Activated B cell treated with CpG ODN at 0.5 μM for 24 hours (primary cell): ENCODE measurements at regions of chr16 and their contacts with region 1.

Region 1: DNA sequence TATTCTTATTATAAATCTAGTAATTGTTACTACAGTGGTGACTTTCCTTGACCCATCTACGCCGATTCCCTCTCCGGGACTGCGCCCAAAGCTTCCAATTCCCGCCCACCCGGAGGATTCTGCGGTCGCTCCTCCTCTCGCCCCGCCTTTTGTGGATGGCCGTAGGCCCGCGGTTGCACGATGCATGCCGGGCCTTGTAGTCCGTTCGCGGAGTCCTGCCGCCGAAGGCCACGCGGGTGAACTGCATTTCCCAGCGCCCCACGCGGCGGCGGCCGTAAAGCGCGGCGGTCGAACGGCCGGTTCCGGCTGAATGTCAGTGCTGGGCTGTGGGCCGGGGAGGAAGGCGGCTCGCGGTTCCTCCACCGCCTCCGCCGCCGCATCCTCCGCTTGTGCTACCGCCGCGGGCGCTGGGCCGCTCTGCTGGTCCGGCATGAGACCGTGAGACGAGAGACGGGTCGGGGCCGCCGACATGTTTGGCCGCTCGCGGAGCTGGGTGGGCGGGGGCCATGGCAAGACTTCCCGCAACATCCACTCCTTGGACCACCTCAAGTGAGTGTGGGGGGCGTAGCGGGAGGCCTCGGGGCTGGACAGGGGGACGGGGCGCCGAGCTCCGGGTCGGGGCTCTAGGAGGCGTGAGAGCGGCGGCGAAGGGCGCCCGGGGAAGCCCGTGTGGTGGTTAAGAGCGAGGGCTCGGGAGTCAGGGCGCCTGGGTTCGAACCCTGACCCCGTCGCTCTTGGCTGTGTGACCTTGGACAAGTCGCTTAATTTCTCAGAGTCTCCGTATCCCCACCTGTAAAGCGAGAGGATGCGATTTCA is at the start of gene CLEC16A:
- DNase-seq: peak; percentile 97
- ATAC-seq: peak; percentile 74
- H3K4me3 Mint-ChIP-seq: peak within 1 kb of the TSS; percentile 90
- H3K27ac Mint-ChIP-seq: peak within 1 kb of the TSS; percentile 81
- H3K4me1 Mint-ChIP-seq: peaks cover 83% of the 10 kb centered on the region
- H3K27me3 Mint-ChIP-seq: no peaks in the 10 kb centered on the region
- CTCF ChIP-seq: no peak
- total RNA-seq, gene CLEC16A: 53.4 and 57.6 TPM in 2 replicates

Region 2: DNA sequence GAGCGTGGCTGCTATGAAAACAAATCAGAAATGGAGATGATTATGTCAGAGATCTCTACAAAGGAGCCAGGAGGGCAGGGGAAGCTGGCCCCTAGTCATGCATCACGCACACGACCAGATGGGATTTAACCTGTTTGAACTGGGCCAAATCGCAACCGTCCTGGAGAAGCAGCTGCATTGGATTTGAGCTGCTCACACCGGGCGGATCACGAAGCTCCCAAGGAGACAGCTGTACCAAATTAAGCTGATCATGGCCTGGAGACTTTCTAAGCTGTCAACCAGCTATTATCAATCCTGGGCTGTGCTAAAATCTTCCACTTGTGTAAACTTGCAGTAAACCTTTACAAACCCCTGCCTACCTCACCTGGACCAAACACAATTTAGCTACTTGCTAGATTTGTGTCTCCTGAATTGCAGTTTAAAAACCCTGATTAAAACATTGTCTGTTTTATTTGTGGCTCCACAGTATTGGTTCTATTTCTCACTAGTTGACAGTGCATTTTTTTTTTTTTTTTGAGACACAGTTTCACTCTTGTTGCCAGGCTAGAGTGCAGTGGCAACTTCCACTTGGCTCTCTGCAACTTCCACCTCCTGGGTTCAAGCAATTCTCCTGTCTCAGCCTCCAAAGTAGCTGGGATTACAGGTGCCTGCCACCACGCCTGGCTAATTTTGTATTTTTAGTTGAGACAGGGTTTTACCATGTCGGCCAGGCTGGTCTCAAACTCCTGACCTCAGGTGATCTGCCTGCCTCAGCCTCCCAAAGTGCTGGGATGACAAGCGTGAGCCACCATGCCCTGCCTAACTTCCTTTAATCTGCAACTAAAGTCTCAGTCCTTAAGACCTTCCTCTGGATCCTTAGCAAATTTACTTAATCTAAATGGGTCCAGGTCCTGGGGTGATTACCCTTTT is 663.9 kb before region 1 on chr16:
- CTCF ChIA-PET with region 1: no interaction called
- POLR2A ChIA-PET with region 1: interaction called, 11 read pairs
- intact Hi-C with region 1: no loop called
- DNase-seq: no peak
- ATAC-seq: no peak
- H3K4me3 Mint-ChIP-seq: no peak overlapping the region
- H3K27ac Mint-ChIP-seq: no peak overlapping the region
- H3K4me1 Mint-ChIP-seq: peaks cover 17% of the 10 kb centered on the region
- H3K27me3 Mint-ChIP-seq: no peaks in the 10 kb centered on the region
- CTCF ChIP-seq: no peak

Region 3: GRCh38 chr16:10737068-10737625 is 207.3 kb before region 1 on chr16:
- CTCF ChIA-PET with region 1: no interaction called
- POLR2A ChIA-PET with region 1: interaction called, 18 read pairs
- intact Hi-C with region 1: no loop called
- DNase-seq: no peak
- ATAC-seq: peak; percentile 65
- H3K4me3 Mint-ChIP-seq: peak overlapping the region; percentile 68
- H3K27ac Mint-ChIP-seq: peak overlapping the region; percentile 90
- H3K4me1 Mint-ChIP-seq: peaks cover 51% of the 10 kb centered on the region
- H3K27me3 Mint-ChIP-seq: no peaks in the 10 kb centered on the region
- CTCF ChIP-seq: peak; percentile 60

Region 4: DNA sequence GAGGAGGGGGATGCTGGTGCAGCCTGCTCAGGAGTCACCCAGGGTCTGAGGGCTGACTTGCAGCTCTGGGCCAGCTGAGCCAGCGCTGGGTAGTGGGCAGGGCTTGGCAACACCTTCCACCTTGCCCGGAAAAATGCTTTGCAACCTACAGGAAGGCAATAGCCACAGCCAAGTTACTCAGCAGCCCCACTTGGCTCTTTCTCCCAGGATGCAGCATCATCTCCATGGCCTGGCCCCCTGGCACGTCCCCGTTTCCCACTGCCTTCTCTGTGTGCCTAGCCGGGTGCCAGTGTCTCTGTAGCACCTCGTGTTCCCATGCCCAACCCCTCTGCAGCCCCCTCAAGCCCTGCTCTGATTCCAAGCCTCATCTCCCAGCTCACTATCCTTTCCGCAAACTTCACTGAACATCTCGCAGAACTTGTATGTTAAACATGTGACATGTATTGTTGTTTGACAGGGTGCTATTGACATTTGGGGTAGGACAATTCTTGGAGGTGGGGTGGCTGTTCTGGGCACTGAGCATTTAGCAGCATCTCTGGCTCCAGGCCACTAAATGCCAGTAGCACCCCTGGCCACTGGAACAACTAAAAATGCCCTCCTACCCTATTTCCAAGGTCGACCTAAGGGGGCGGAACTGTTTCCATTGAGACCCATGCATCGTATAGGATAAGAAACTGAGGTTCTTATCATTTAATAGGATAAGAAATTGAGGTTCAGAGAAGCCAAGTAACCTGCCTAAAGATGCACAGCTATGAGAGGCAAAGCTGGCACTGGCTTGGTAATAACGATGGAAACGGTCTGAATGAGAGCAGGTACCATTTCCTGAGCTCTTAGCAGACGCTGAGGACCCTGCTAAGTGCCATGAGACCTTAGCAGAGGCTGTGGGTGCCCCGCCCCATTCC is 14.4 kb before region 1 on chr16:
- CTCF ChIA-PET with region 1: interaction called, 6 read pairs
- POLR2A ChIA-PET with region 1: interaction called, 15 read pairs
- intact Hi-C with region 1: loop called (anchors 1 kb)
- DNase-seq: no peak
- ATAC-seq: peak; percentile 14
- H3K4me3 Mint-ChIP-seq: peak overlapping the region; percentile 5
- H3K27ac Mint-ChIP-seq: peak overlapping the region; percentile 71
- H3K4me1 Mint-ChIP-seq: peaks cover 54% of the 10 kb centered on the region
- H3K27me3 Mint-ChIP-seq: no peaks in the 10 kb centered on the region
- CTCF ChIP-seq: no peak

Region 5: GRCh38 chr16:11797166-11797956 is 852.9 kb after region 1 on chr16 and contains the start of gene ZC3H7A:
- CTCF ChIA-PET with region 1: no interaction called
- POLR2A ChIA-PET with region 1: no interaction called
- intact Hi-C with region 1: loop called (anchors 5 kb)
- DNase-seq: peak; percentile 94
- ATAC-seq: peak; percentile 97
- H3K4me3 Mint-ChIP-seq: peak within 1 kb of the TSS; percentile 95
- H3K27ac Mint-ChIP-seq: peak within 1 kb of the TSS; percentile 96
- H3K4me1 Mint-ChIP-seq: peaks cover 73% of the 10 kb centered on the region
- H3K27me3 Mint-ChIP-seq: no peaks in the 10 kb centered on the region
- CTCF ChIP-seq: no peak
- total RNA-seq, gene ZC3H7A: 143 and 163 TPM in 2 replicates

Region 6: DNA sequence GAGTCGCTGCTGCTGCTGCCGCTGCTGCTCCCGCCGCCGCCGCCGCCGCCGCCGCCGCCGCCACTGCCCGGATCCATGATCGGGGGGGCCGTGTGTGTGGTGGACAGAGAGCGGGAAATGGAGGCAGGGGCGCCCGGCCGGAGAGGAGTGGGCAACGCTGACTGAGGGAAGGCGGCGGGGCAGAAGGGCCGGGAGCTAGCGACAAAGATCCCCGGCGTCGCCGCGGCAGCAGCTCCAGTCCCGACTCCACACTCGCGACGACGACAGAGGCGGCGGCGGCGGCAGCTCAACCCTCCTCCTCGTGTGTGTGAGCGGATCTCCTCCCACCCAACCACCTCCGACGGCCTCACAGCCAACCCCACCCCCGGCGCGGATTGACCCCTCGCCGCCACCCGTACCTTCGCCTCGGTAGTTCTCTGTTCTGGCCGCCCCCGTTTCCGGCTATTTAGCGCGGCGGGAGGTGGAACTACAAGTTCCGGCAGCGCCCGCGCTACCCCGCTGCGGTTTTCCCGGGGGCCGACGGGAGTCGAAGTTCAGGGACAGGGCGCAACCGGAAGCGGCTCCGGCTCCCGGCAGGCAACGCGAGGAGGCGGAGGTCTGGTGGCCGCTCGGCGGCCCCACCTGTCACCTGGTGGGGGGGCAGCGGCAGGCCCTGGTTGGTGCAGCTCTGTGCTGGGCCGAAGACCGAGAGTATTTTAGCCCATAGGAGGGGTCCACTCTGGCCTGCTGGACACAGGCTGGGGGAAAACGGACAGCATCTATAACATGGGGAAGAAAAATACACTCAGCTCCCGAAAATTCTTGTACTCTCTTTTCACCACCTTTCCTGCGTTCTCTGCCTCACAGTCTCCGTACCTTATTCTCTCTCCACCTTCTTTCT is 971.4 kb after region 1 on chr16 and contains the start of gene GSPT1:
- CTCF ChIA-PET with region 1: no interaction called
- POLR2A ChIA-PET with region 1: no interaction called
- intact Hi-C with region 1: loop called (anchors 5 kb)
- DNase-seq: peak; percentile 98
- ATAC-seq: peak; percentile 93
- H3K4me3 Mint-ChIP-seq: peak within 1 kb of the TSS; percentile 89
- H3K27ac Mint-ChIP-seq: peak within 1 kb of the TSS; percentile 89
- H3K4me1 Mint-ChIP-seq: peaks cover 31% of the 10 kb centered on the region
- H3K27me3 Mint-ChIP-seq: peaks cover 4% of the 10 kb centered on the region
- CTCF ChIP-seq: no peak
- total RNA-seq, gene GSPT1: 99.9 and 101 TPM in 2 replicates

Region 7: DNA sequence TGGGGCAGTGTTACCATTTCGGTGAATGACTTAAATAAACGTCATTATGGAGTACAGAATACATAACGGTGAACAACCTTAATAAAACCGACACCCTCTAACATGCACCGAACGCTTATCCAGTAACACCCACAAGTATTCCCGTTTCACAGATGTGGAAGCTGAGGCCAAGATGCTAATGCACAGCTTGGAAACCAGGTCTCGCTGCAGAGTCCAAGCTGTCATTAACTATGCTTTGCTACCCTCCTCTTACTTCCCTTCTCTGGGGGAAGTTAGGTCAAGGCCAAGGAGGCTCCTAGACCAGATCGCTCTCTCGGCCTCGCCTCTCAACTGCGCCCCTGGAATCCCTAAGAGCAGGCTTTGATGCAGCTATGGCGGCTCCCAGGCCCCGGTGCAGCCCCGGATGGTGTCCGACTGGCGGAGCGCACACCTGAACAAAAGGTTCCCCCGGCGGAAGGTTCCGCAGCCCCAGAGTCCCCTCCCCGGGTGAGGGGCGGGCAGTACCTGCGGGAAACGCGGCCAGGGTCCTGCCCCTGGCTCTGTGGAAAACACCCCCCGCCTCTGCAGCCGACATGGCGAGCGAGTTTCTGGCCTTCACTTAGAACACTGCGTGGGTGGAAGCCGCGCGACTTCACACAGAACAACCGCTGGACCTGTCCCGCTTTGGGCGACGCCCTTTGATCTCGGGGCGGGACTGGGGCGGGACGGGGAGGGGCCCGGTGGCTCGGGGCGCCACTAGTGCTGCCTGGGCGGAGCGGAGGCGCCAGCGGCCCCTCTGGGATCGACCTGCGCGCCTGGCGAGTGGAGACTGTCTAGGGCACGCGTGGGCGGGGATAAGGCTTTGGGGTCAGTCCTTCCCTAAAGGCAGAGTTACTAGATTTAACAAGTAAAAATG is 1859.0 kb after region 1 on chr16 and contains the start of gene CPPED1:
- CTCF ChIA-PET with region 1: no interaction called
- POLR2A ChIA-PET with region 1: no interaction called
- intact Hi-C with region 1: loop called (anchors 10 kb)
- DNase-seq: peak; percentile 94
- ATAC-seq: peak; percentile 89
- H3K4me3 Mint-ChIP-seq: peak within 1 kb of the TSS; percentile 93
- H3K27ac Mint-ChIP-seq: peak within 1 kb of the TSS; percentile 89
- H3K4me1 Mint-ChIP-seq: peaks cover 34% of the 10 kb centered on the region
- H3K27me3 Mint-ChIP-seq: no peaks in the 10 kb centered on the region
- CTCF ChIP-seq: no peak
- total RNA-seq, gene CPPED1: 12.2 and 14.1 TPM in 2 replicates